Dorsolateral prefrontal cortex (tissue), 120 donors: ENCODE measurements at regions of chrX and their contacts with region 1.

Region 1: GRCh38 chrX:64975989-64976672 is at the start of gene ZC4H2:
- DNase-seq: peak; percentile 59 to 85 (median 80)
- H3K4me3 ChIP-seq: peak within 1 kb of the TSS; percentile 44 to 79 (median 63)
- H3K27ac ChIP-seq: peak within 1 kb of the TSS in 23 of 59 donors; percentile 7 to 72 (median 37)
- H3K27me3 ChIP-seq: peaks cover 0 to 71% (median 8%) of the 10 kb centered on the region in 45 donors
- CTCF ChIP-seq: peak in 6 of 56 donors; percentile 10 to 25 (median 14)
- total RNA-seq, gene ZC4H2: 8.4 to 29.1 (median 18.6) TPM

Region 2: DNA sequence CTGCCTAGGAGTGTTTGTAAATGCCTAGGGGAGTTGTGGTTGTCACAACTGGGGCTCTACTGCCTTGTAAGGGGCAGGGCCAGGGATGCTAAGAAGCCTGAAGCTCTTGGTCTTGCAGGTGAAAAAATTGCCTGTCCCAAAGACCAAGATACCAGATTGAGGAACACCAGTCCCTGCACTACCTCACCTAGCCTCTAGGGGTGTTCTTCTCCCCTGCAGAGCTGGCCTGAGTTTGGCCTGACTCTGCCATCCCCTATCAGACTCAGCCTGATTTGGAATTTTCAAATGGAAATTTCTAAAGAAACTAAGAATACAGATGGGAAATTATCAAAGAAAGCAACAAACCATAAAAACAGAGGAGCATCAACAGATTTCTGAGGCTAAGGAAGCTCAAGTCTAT is 90.3 kb before region 1 on chrX:
- intact Hi-C with region 1: no loop called
- DNase-seq: no peak
- H3K4me3 ChIP-seq: no peak overlapping the region
- H3K27ac ChIP-seq: no peak overlapping the region
- H3K27me3 ChIP-seq: peaks cover 0 to 16% (median 0%) of the 10 kb centered on the region in 45 donors
- CTCF ChIP-seq: peak in 39 of 56 donors; percentile 8 to 57 (median 36)

Region 3: GRCh38 chrX:65534450-65535292 is 558.5 kb after region 1 on chrX and contains the start of gene LAS1L:
- intact Hi-C with region 1: loop called in 1 of 2 experiments (anchors 10 kb)
- DNase-seq: peak; percentile 84 to 94 (median 92)
- H3K4me3 ChIP-seq: peak within 1 kb of the TSS; percentile 36 to 86 (median 74)
- H3K27ac ChIP-seq: peak within 1 kb of the TSS in 42 of 59 donors; percentile 2 to 84 (median 66)
- H3K27me3 ChIP-seq: peaks cover 0 to 60% (median 6%) of the 10 kb centered on the region in 45 donors
- CTCF ChIP-seq: peak in 15 of 56 donors; percentile 10 to 39 (median 23)
- total RNA-seq, gene LAS1L: 31.2 to 76.2 (median 51.0) TPM